GM10248 (cell line): ENCODE measurements at regions of chr1 and their contacts with region 1.

Region 1: GRCh38 chr1:93489756-93490155 is 41.8 kb downstream of the FNBP1L start:
- DNase-seq: no peak
- CTCF ChIP-seq: no peak

Region 2: GRCh38 chr1:93374334-93375106 is 115.2 kb before region 1 on chr1:
- CTCF ChIA-PET with region 1: no interaction called
- POLR2A ChIA-PET with region 1: no interaction called
- DNase-seq: no peak
- CTCF ChIP-seq: no peak

Region 3: GRCh38 chr1:93473968-93474720 is 15.6 kb before region 1 on chr1:
- CTCF ChIA-PET with region 1: interaction called, 14 read pairs
- POLR2A ChIA-PET with region 1: no interaction called
- DNase-seq: no peak
- CTCF ChIP-seq: no peak

Region 4: GRCh38 chr1:93597709-93598108 is 108.0 kb after region 1 on chr1:
- CTCF ChIA-PET with region 1: no interaction called
- POLR2A ChIA-PET with region 1: no interaction called
- DNase-seq: no peak
- CTCF ChIP-seq: no peak